ENCODE measurements at regions of chr17 and their contacts with region 1.

Region 1: DNA sequence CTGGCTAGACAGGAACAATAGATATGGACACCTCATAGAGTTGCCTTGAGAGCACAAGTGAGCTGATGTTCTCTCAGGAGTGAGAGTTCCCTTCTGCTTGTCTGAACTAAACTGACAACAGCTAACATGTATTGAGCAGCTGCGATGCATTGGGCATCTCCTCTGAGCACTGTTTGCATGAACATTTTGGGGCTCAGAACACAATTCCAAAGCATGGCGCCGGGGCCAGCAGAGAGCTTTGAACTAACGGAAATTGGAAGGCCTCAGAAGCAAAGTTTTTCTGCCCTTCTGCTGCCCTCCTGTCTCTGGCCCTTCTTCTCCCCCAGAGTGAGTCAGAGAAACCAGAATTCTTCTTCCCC is 38.1 kb downstream of the TRPV2 start:
- H3K4me3 ChIP-seq: no peak overlapping the region
- H3K27ac ChIP-seq: no peak overlapping the region
- H3K4me1 ChIP-seq: no peaks in the 10 kb centered on the region
- CTCF ChIP-seq: no peak

Region 2: DNA sequence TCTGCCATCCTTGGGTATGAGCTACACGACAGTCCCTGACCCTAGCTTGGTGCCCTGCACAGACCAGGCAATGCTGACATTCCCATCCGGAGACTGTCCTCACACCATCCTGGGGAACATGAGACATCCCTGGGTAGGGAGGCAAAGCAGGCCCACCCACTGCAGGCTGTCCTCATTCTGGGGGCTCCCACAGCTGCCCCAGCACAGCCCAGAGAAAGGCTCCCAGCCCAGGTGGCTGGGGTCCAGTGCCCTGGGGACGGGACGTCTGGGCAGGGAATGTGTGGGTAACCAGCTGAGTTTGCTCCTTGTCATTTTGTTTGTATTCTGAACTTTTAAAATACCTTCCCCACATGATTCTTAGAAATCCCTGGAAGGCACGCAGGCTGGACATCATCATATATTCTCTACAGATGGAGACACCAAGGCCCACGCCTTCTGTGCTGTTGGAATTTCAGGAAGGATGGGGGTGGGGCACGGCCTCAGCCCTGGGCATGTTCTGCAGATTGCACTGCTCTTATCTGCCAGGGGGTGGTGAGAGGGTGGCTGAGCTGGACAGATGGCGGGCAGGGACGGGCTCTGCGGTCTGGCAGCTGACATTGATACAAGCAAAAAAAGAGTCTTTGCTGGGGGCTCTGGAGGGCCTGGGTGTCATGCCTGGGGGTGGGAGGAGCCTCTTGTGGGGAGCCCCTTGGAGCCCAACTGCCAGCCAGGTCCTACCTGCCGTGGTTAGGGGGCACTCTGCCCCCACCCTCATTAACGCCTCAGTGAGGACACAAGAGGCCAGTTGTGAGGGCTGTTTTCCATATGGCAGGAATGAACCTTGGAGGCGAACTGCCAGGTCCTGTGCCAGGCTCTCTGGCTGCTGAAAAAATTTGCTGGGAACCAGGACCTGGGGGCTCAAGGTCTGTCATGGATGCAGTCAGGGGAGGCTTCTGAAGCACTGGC is 10.2 kb after region 1 on chr17:
- CTCF ChIA-PET with region 1: interaction called, 22 read pairs
- POLR2A ChIA-PET with region 1: no interaction called
- H3K4me3 ChIP-seq: no peak overlapping the region
- H3K27ac ChIP-seq: no peak overlapping the region
- H3K4me1 ChIP-seq: no peaks in the 10 kb centered on the region
- CTCF ChIP-seq: no peak

Region 3: DNA sequence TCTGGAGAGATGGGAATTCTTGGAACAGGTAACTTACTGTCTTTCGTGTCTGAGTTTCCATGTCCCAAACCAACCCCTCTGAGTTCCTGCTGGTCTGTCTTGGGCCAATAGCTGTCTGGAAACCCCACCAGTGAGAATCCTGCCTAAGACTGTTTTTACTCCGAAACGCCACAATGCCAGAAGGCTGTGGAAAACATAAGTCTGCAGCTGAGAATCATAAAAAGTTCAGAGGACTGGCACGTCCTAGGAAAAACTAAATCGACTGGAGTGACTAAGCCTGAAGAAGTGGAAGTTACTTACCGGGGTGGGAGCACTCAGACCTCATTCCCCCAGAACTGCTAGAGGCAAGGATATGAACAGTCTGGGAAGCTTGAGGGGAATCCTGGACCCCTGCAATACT is 25.2 kb after region 1 on chr17:
- CTCF ChIA-PET with region 1: interaction called, 13 read pairs
- POLR2A ChIA-PET with region 1: no interaction called
- H3K4me3 ChIP-seq: no peak overlapping the region
- H3K27ac ChIP-seq: no peak overlapping the region
- H3K4me1 ChIP-seq: no peaks in the 10 kb centered on the region
- CTCF ChIP-seq: no peak

Region 4: DNA sequence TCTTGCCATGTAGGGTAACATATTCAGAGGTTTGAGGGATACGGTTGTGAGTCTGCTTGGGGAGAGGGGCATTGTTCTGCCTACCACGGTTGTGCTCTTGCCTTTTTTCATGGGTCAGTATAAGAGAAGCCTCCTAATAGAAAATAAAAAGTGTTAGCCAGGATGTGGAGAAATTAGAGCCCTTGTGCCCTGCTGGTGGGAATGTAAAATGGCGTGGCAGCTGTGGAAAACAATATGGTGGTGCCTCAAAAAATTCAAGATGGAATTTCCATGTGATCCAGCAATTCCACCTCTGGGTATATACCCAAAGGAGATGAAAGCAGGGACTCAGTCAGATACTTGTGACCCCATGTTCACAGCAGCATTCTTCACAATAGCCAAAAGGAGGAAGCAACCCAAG is 52.7 kb after region 1 on chr17:
- CTCF ChIA-PET with region 1: interaction called, 21 read pairs
- POLR2A ChIA-PET with region 1: no interaction called
- H3K4me3 ChIP-seq: no peak overlapping the region
- H3K27ac ChIP-seq: no peak overlapping the region
- H3K4me1 ChIP-seq: no peaks in the 10 kb centered on the region
- CTCF ChIP-seq: no peak

Region 5: GRCh38 chr17:16521070-16521727 is 67.7 kb after region 1 on chr17:
- CTCF ChIA-PET with region 1: interaction called, 261 read pairs
- POLR2A ChIA-PET with region 1: interaction called, 9 read pairs
- H3K4me3 ChIP-seq: no peak overlapping the region
- H3K27ac ChIP-seq: no peak overlapping the region
- H3K4me1 ChIP-seq: peaks cover 3% of the 10 kb centered on the region; the same call in 1 of the 2 replicates
- CTCF ChIP-seq: peak; percentile 80

Region 6: GRCh38 chr17:16589097-16589969 is 135.9 kb after region 1 on chr17:
- CTCF ChIA-PET with region 1: interaction called, 23 read pairs
- POLR2A ChIA-PET with region 1: no interaction called
- H3K4me3 ChIP-seq: peak overlapping the region; percentile 47
- H3K27ac ChIP-seq: no peak overlapping the region; the same call in 1 of the 2 replicates
- H3K4me1 ChIP-seq: no peaks in the 10 kb centered on the region
- CTCF ChIP-seq: peak; percentile 86

Region 7: DNA sequence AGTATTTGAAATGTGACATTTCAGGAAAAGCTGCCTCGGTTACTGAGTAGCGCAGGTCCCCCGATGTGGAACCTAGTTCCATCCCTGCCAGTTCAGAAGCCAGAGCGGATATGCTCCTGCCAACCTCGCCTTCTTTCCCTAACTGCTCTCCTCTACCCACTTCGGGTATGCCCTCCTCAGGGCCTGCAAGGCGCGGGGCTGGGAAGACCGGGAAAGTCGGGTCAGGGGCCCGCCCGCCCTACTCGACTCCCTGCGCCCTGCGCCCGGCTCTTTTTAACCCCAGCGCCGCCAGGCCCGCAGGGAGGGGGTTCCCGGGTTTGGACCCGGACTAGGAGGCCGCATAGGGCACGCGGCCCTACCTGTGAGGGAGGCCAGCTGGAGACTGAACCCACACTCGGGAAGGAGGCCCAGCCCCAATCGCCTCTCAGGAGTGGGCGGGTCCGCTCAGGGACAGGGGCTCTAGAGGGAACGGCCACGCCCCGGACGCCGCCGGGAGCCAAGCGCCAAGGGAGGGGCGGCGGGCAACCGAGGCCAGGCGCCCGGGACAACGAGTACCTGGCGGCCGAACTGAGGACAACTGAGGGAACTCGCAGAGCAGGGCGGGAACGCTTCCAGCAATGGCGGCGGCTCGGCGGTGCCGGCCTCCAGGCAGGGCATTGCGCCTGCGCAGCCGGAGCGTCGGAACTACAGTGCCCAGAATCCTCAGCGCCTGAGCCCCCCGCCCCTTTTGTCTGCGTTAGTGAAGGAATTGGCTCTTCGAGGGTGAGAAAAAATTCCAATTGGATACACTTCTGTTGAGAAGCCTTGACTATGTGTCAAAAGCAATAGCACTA is 200.0 kb after region 1 on chr17 and contains the start of gene ZNF624:
- CTCF ChIA-PET with region 1: no interaction called
- POLR2A ChIA-PET with region 1: no interaction called
- H3K4me3 ChIP-seq: peak within 1 kb of the TSS; percentile 71
- H3K27ac ChIP-seq: peak within 1 kb of the TSS; percentile 93
- H3K4me1 ChIP-seq: 0 out of 2 replicates have a peak, but pooled peaks cover 6% of the 10 kb centered on the region
- CTCF ChIP-seq: 0 out of 2 replicates have a peak, but pooled peaks have one; percentile 28